ENCODE measurements at regions of chr19 and their contacts with region 1.

Region 1: GRCh38 chr19:17766543-17767131 is 15.4 kb downstream of the FCHO1 start:
- DNase-seq: peak; percentile 76 to 77
- H3K4me3 ChIP-seq: no peak overlapping the region
- H3K27ac ChIP-seq: no peak overlapping the region
- H3K4me1 ChIP-seq: peaks cover 3 to 6% of the 10 kb centered on the region in 2 donors
- H3K27me3 ChIP-seq: no peaks in the 10 kb centered on the region
- CTCF ChIP-seq: peak; percentile 45 to 78 (median 64)
- POLR2A ChIP-seq: no peak

Region 2: GRCh38 chr19:17706750-17707181 is 59.9 kb before region 1 on chr19:
- intact Hi-C with region 1: loop called (anchors 5 kb)
- DNase-seq: no peak
- H3K4me3 ChIP-seq: no peak overlapping the region
- H3K27ac ChIP-seq: no peak overlapping the region
- H3K4me1 ChIP-seq: no peaks in the 10 kb centered on the region
- H3K27me3 ChIP-seq: no peaks in the 10 kb centered on the region
- CTCF ChIP-seq: no peak
- POLR2A ChIP-seq: no peak

Region 3: GRCh38 chr19:18007044-18007916 is 240.6 kb after region 1 on chr19:
- intact Hi-C with region 1: no loop called
- DNase-seq: peak; percentile 78 to 84
- H3K4me3 ChIP-seq: peak overlapping the region; percentile 10 to 58 (median 18)
- H3K27ac ChIP-seq: peak overlapping the region; percentile 91 to 93 (median 92)
- H3K4me1 ChIP-seq: peaks cover 0 to 23% of the 10 kb centered on the region in 2 donors
- H3K27me3 ChIP-seq: no peaks in the 10 kb centered on the region
- CTCF ChIP-seq: peak; percentile 90 to 98 (median 96)
- POLR2A ChIP-seq: peak in 1 of 2 donors; percentile 62

Measured in thyroid gland (tissue), 4 donors.